Head of caudate nucleus (tissue), 42 donors: ENCODE measurements at regions of chr1 and their contacts with region 1.

Region 1: GRCh38 chr1:46303038-46303871 is at the starts of genes LRRC41 and UQCRH:
- DNase-seq: peak; percentile 93 to 98 (median 96)

Region 2: GRCh38 chr1:44970317-44970716 is 1332.9 kb before region 1 on chr1:
- intact Hi-C with region 1: no loop called
- DNase-seq: no peak

Region 3: DNA sequence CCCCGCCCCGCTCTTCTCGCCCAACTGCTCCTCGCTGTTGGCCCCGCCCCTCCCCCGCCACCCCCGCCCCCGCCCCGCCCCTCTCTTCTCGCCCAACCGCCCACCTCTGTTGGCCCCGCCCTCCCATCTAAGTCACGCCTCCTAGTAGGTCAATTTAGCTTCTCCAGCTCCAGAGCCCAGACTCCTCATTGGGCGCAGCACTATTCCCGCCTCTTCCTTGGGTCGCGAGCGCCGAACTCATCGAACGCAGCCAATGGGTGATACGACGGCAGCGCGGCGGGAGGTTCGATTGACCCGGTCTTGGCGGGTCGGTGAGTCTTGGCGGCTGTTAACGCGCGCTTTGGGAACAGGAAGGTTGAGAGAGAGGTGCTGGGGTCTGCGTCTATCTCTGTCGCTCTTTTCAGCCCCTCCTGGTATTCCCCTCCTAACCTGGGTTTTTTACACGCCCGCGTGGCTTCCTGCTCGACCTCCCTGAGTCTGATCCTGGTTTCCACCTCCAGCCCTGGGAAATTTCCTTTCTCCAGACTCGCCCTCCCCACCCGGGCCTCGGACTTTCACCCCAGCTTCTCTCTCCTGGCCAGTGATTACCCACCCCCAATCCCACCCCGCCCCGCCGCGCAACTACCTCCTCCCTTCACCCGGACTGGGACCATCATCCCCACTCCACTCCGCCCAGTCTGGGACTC is 55.7 kb before region 1 on chr1 and contains the start of gene RAD54L:
- intact Hi-C with region 1: loop called (anchors 2 kb)
- DNase-seq: peak; percentile 94 to 99 (median 98)

Region 4: GRCh38 chr1:46340404-46341221 is 37.4 kb after region 1 on chr1 and contains the start of gene NSUN4:
- intact Hi-C with region 1: loop called (anchors 5 kb)
- DNase-seq: peak; percentile 88 to 98 (median 93)

Region 5: DNA sequence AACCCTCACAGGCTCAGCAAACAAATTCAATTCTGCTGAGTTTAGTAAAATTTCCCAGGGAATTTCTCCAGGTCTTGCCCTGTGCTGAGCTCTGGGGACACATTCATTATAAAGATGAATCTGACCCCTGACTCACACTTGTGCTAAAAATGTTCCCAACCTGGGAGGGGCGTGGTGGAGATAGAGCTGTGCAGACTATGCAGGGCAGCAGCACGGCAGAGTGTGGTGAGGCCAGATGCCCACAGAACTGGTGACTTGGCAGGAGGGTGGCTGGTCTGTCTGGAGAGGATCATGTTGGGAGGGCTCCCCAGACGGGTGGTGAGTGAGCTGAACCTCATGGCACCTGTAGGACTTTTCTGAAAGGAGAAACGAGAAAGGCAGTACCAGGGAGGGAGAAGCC is 122.5 kb after region 1 on chr1:
- intact Hi-C with region 1: no loop called
- DNase-seq: no peak